Calu3 (cell line): ENCODE measurements at regions of chr1 and their contacts with region 1.

Region 1: GRCh38 chr1:165928075-165928731 is 100.8 kb downstream of the UCK2 start:
- DNase-seq: peak; percentile 72
- H3K4me3 Mint-ChIP-seq: no peak overlapping the region
- H3K27ac Mint-ChIP-seq: no peak overlapping the region
- H3K4me1 Mint-ChIP-seq: no peaks in the 10 kb centered on the region
- H3K27me3 Mint-ChIP-seq: no peaks in the 10 kb centered on the region
- CTCF ChIP-seq: peak; percentile 60

Region 2: DNA sequence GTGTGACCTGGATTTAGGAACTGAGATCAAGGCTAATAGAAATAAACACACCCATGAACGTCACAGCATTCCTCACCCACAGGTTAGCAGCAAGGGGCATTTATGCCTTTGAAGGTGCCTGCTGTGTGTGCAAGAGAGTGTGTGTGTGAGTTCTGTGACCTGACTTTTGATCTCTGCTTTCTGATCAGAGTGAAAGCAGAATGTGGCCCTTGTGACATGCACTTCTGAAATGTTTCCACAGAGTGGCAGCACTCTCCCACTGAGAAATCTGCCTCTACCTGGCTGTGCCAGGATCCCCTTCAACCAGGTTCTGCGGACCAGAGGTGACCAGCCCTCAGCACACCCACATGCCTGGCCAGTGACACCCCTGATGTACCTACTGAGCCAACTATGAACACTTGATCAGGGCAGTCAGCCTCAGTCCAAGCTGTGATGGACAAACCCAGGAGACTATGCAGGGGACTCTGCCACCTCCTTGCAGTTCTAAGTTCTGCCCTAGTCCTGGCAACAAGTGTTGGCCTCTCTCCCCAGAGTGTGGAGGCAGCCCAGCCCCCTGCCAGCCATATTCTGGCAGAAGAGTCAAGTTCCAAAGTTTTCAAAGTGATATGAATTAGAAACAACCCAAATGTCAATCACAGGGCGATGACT is 524.2 kb before region 1 on chr1:
- CTCF ChIA-PET with region 1: no interaction called
- intact Hi-C with region 1: loop called (anchors 10 kb)
- DNase-seq: peak; percentile 57
- H3K4me3 Mint-ChIP-seq: no peak overlapping the region
- H3K27ac Mint-ChIP-seq: no peak overlapping the region
- H3K4me1 Mint-ChIP-seq: no peaks in the 10 kb centered on the region
- H3K27me3 Mint-ChIP-seq: peaks cover 23% of the 10 kb centered on the region
- CTCF ChIP-seq: peak; percentile 76

Region 3: GRCh38 chr1:165490175-165490574 is 438.0 kb before region 1 on chr1:
- CTCF ChIA-PET with region 1: no interaction called
- intact Hi-C with region 1: no loop called
- DNase-seq: no peak
- H3K4me3 Mint-ChIP-seq: no peak overlapping the region
- H3K27ac Mint-ChIP-seq: no peak overlapping the region
- H3K4me1 Mint-ChIP-seq: no peaks in the 10 kb centered on the region
- H3K27me3 Mint-ChIP-seq: peaks cover 43% of the 10 kb centered on the region
- CTCF ChIP-seq: no peak

Region 4: DNA sequence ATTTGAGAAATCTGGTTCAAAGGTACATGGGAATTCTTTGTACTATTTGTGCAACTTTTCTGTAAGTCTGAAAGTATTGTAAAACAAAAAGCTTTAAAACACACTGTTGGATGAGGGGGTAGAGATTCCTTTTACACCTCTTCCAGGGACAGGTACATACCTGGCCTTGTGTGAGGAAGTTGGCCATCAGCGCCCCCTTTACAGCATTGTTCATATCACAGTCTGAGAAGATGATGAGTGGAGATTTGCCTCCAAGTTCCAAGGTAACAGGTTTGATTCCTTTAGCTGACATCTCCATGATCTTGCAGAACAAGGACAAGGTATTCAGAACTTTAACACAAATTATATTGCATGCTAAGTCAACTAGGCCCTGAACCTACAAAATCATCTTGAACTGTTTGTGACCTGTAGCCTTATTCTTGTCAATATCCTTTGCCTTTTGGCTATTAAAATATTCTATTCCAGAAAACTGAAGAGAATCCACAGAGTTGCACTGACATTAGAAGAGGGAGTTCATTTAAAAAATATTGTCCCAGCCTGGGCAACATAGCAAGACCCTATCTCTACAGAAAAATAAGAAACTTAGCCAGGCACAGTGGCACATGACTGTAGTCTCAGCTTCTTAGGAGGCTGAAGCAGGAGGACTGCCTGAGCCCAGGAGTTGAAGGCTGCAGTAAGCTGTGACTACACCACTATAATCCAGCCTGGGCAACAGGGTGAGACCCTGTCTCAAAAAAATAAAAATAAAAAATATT is 248.7 kb before region 1 on chr1:
- CTCF ChIA-PET with region 1: no interaction called
- intact Hi-C with region 1: no loop called
- DNase-seq: no peak
- H3K4me3 Mint-ChIP-seq: no peak overlapping the region
- H3K27ac Mint-ChIP-seq: no peak overlapping the region
- H3K4me1 Mint-ChIP-seq: no peaks in the 10 kb centered on the region
- H3K27me3 Mint-ChIP-seq: no peaks in the 10 kb centered on the region
- CTCF ChIP-seq: no peak

Region 5: DNA sequence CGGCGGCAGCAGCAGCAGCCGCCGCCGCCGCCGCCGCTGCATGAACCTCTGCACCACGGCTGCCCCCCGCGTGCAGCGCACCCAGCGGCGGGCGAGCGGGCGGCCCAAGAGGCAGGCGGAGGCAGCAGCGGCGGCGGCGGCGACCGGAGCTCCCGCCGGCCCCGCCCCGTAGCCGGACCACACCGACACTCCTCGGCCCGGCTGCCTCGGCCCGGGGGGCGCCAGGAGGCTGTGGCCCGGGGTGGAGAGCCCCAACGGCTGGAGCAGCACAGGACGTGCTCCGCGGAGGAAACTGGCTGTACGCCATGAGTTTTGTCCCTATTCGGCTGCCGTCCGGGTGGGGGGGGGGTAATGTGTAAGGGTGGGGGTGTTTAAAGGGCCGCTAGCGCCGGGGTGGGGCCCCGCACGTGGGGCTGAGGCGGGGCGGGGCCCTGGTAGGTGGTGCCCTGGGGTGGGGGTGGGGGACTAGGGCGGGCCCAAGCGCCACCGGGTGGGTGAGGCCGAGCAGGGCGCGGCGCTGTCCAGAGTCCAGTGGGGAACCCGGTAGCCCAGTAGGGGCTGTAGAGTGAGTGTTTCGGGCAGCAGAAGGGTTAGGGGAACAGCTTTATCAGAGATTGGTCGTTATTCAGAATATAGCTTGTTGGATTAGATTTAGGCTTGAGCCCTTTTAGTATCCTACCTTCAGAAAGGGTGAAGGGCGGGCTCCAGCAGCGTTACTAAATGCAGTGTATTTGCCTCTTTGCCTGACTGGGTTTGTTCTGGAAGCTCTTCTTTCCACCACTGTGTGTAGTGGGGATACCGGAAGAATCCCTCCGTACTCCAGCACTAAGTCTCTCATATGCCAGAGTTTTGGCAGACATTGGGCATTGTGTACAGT is 238.7 kb after region 1 on chr1 and contains the start of gene FAM78B:
- CTCF ChIA-PET with region 1: interaction called, 4 read pairs
- intact Hi-C with region 1: loop called (anchors 1 kb)
- DNase-seq: peak; percentile 79
- H3K4me3 Mint-ChIP-seq: peak within 1 kb of the TSS; percentile 77
- H3K27ac Mint-ChIP-seq: peak within 1 kb of the TSS; percentile 62
- H3K4me1 Mint-ChIP-seq: peaks cover 8% of the 10 kb centered on the region
- H3K27me3 Mint-ChIP-seq: peaks cover 27% of the 10 kb centered on the region
- CTCF ChIP-seq: no peak
- total RNA-seq, gene FAM78B: 1.9 and 4.9 TPM in 2 replicates

Region 6: DNA sequence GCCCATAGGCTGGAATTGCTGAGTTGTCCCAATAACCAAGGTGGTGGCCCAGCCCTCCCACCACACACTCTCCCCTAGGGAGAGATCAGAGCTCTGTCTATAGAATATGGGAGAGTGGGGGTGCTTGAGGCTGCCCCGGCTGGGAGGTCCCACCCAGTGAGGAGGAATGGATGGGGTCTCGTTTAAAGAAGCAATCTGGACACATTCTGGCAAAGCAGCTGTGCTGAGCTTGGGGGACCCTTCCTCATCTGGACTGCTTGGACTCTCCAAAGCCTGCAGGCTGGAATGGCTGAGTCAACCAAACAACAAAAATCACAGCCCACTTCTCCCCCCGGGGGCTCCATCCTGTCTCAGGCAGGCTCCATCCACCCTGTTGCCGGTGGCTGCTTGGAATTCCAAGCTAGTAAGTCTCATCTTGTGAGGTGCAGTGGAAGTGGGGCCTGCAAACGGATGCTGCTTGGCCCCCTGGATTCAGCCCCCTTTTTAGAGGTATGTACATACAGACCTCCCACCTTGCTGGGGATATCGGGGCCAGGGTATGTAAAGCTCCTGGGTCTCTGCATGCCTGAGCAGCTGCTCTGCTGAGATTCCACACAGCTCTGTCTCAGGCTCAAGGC is 305.7 kb after region 1 on chr1:
- CTCF ChIA-PET with region 1: no interaction called
- intact Hi-C with region 1: loop called (anchors 10 kb)
- DNase-seq: no peak
- H3K4me3 Mint-ChIP-seq: no peak overlapping the region
- H3K27ac Mint-ChIP-seq: no peak overlapping the region
- H3K4me1 Mint-ChIP-seq: no peaks in the 10 kb centered on the region
- H3K27me3 Mint-ChIP-seq: peaks cover 40% of the 10 kb centered on the region
- CTCF ChIP-seq: no peak

Region 7: GRCh38 chr1:166432655-166433054 is 504.5 kb after region 1 on chr1:
- CTCF ChIA-PET with region 1: interaction called, 3 read pairs
- intact Hi-C with region 1: loop called (anchors 1 kb)
- DNase-seq: no peak
- H3K4me3 Mint-ChIP-seq: no peak overlapping the region
- H3K27ac Mint-ChIP-seq: no peak overlapping the region
- H3K4me1 Mint-ChIP-seq: no peaks in the 10 kb centered on the region
- H3K27me3 Mint-ChIP-seq: no peaks in the 10 kb centered on the region
- CTCF ChIP-seq: no peak